ENCODE measurements at regions of chr1 and their contacts with region 1.

Region 1: DNA sequence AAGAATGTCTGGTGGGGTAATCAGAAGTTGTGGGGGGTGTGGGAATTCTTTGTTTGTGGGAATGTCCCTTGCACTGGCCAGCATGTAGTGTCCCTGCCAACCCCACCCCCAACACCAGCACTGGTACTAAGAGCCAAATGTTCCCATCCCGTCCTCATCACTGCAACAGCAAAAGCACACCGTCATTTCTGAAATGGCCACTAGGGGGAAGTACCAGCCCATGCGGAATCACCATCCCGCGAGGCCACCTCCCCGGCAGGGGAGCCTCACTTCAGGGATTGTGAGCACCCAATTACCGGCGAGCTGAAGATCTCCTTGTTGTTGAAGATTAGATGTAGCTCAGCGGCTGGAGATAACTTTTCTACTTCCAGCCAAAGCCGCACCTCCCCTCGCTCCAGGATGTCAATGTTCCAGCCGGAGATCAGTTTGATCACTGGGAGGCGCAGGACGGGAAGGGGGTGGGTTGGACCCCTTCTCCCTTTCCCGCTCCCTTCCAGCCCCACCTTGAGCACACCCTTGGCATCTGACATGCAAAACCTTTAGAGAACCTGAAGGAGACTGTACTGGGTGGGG is 41.0 kb downstream of the MYOM3 start:
- DNase-seq: peak; percentile 80
- ATAC-seq: peak; percentile 84

Region 2: GRCh38 chr1:24027838-24028468 is 43.0 kb before region 1 on chr1:
- intact Hi-C with region 1: no loop called
- DNase-seq: no peak
- ATAC-seq: peak; percentile 71

Region 3: DNA sequence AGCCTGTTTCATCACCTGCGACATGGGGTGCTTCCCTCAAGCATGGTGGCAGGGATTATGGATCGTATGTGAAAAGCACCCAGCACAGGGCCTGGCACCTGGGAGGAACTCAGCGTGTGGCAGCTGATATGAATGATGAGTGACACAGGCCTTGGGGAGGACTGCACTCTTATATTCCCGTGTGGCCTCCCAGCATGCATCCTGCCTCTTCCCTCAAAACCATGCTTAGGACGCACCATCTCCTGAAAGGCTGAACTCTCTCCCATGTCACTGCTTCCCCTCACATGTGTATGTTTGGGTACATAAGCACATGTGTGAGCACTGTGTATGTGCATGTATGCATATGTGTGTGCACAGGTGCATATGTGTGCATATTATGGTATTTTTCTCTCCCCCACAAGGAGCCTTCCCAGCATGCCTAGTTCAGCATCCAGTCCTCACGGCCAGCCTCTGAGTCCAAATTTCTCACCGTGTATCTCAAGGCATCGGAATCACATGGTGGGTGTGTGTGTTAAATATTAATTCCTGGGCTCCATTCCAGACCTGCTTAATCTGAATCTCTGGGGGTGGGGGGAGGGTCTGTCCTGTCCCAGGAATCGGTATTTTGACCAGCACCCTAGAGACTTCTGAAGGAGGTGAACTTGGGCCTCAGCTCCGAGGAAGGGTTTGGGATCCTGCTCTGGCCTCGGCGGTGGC is 28.2 kb after region 1 on chr1:
- intact Hi-C with region 1: loop called (anchors 1 kb)
- DNase-seq: no peak
- ATAC-seq: no peak